Activated B cell treated with CpG ODN at 0.5 μM for 24 hours (primary cell): ENCODE measurements at regions of chr17 and their contacts with region 1.

Region 1: GRCh38 chr17:29568331-29569244 is at the start of gene TP53I13:
- DNase-seq: peak; percentile 83
- ATAC-seq: peak; percentile 65
- H3K4me3 Mint-ChIP-seq: peak within 1 kb of the TSS; percentile 97
- H3K27ac Mint-ChIP-seq: peak within 1 kb of the TSS; percentile 97
- H3K4me1 Mint-ChIP-seq: peaks cover 32% of the 10 kb centered on the region
- H3K27me3 Mint-ChIP-seq: no peaks in the 10 kb centered on the region
- CTCF ChIP-seq: no peak
- total RNA-seq, gene TP53I13: 65.1 and 71.2 TPM in 2 replicates

Region 2: GRCh38 chr17:29369831-29370735 is 198.5 kb before region 1 on chr17:
- CTCF ChIA-PET with region 1: interaction called, 17 read pairs
- POLR2A ChIA-PET with region 1: interaction called, 4 read pairs
- intact Hi-C with region 1: no loop called
- DNase-seq: peak; percentile 29
- ATAC-seq: peak; percentile 92
- H3K4me3 Mint-ChIP-seq: no peak overlapping the region
- H3K27ac Mint-ChIP-seq: no peak overlapping the region
- H3K4me1 Mint-ChIP-seq: no peaks in the 10 kb centered on the region
- H3K27me3 Mint-ChIP-seq: no peaks in the 10 kb centered on the region
- CTCF ChIP-seq: peak; percentile 46

Region 3: GRCh38 chr17:29533976-29534375 is 34.6 kb before region 1 on chr17:
- CTCF ChIA-PET with region 1: interaction called, 19 read pairs
- POLR2A ChIA-PET with region 1: interaction called, 4 read pairs
- intact Hi-C with region 1: loop called (anchors 2 kb)
- DNase-seq: no peak
- ATAC-seq: no peak
- H3K4me3 Mint-ChIP-seq: no peak overlapping the region
- H3K27ac Mint-ChIP-seq: no peak overlapping the region
- H3K4me1 Mint-ChIP-seq: no peaks in the 10 kb centered on the region
- H3K27me3 Mint-ChIP-seq: no peaks in the 10 kb centered on the region
- CTCF ChIP-seq: no peak

Region 4: GRCh38 chr17:29589524-29590410 is 21.2 kb after region 1 on chr17 and contains the start of gene GIT1:
- CTCF ChIA-PET with region 1: interaction called, 11 read pairs
- POLR2A ChIA-PET with region 1: interaction called, 7 read pairs
- intact Hi-C with region 1: loop called (anchors 1 kb)
- DNase-seq: peak; percentile 88
- ATAC-seq: peak; percentile 83
- H3K4me3 Mint-ChIP-seq: peak within 1 kb of the TSS; percentile 87
- H3K27ac Mint-ChIP-seq: peak within 1 kb of the TSS; percentile 83
- H3K4me1 Mint-ChIP-seq: peaks cover 73% of the 10 kb centered on the region
- H3K27me3 Mint-ChIP-seq: no peaks in the 10 kb centered on the region
- CTCF ChIP-seq: no peak
- total RNA-seq, gene GIT1: 41.7 and 45.3 TPM in 2 replicates

Region 5: GRCh38 chr17:29677221-29677791 is 108.7 kb after region 1 on chr17:
- CTCF ChIA-PET with region 1: no interaction called
- POLR2A ChIA-PET with region 1: no interaction called
- intact Hi-C with region 1: no loop called
- DNase-seq: no peak
- ATAC-seq: no peak
- H3K4me3 Mint-ChIP-seq: no peak overlapping the region
- H3K27ac Mint-ChIP-seq: peak overlapping the region; percentile 72
- H3K4me1 Mint-ChIP-seq: peaks cover 32% of the 10 kb centered on the region
- H3K27me3 Mint-ChIP-seq: no peaks in the 10 kb centered on the region
- CTCF ChIP-seq: no peak

Region 6: GRCh38 chr17:31313982-31314784 is 1745.6 kb after region 1 on chr17 and contains the start of gene EVI2B:
- CTCF ChIA-PET with region 1: no interaction called
- POLR2A ChIA-PET with region 1: no interaction called
- intact Hi-C with region 1: loop called (anchors 5 kb)
- DNase-seq: no peak
- ATAC-seq: peak; percentile 25
- H3K4me3 Mint-ChIP-seq: peak within 1 kb of the TSS; percentile 93
- H3K27ac Mint-ChIP-seq: peak within 1 kb of the TSS; percentile 94
- H3K4me1 Mint-ChIP-seq: peaks cover 63% of the 10 kb centered on the region
- H3K27me3 Mint-ChIP-seq: no peaks in the 10 kb centered on the region
- CTCF ChIP-seq: no peak
- total RNA-seq, gene EVI2B: 104 and 111 TPM in 2 replicates